ENCODE measurements at regions of chr7 and their contacts with region 1.

Region 1: GRCh38 chr7:82335927-82336326 is 107.7 kb downstream of the CACNA2D1 start:
- DNase-seq: no peak
- ATAC-seq: peak; percentile 87
- H3K4me3 ChIP-seq: no peak overlapping the region
- H3K27ac ChIP-seq: no peak overlapping the region
- H3K4me1 ChIP-seq: no peaks in the 10 kb centered on the region
- H3K27me3 ChIP-seq: no peaks in the 10 kb centered on the region
- CTCF ChIP-seq: no peak; a peak in 1 of 6 replicates
- EP300 ChIP-seq: no peak
- POLR2A ChIP-seq: no peak
- RAD21 ChIP-seq: no peak

Region 2: GRCh38 chr7:81361769-81362312 is 974.1 kb before region 1 on chr7:
- CTCF ChIA-PET with region 1: no interaction called
- POLR2A ChIA-PET with region 1: no interaction called
- RAD21 ChIA-PET with region 1: no interaction called
- SMC1A ChIA-PET with region 1: no interaction called
- in situ Hi-C with region 1: no loop called
- intact Hi-C with region 1: no loop called
- DNase-seq: no peak
- ATAC-seq: no peak
- H3K4me3 ChIP-seq: no peak overlapping the region
- H3K27ac ChIP-seq: no peak overlapping the region
- H3K4me1 ChIP-seq: no peaks in the 10 kb centered on the region
- H3K27me3 ChIP-seq: no peaks in the 10 kb centered on the region
- CTCF ChIP-seq: no peak
- EP300 ChIP-seq: no peak
- POLR2A ChIP-seq: no peak
- RAD21 ChIP-seq: no peak

Region 3: GRCh38 chr7:82325416-82325815 is 10.5 kb before region 1 on chr7:
- CTCF ChIA-PET with region 1: interaction called, 6 read pairs
- POLR2A ChIA-PET with region 1: interaction called, 6 read pairs
- RAD21 ChIA-PET with region 1: interaction called, 5 read pairs
- SMC1A ChIA-PET with region 1: interaction called, 31 read pairs
- in situ Hi-C with region 1: no loop called
- intact Hi-C with region 1: no loop called
- DNase-seq: no peak
- ATAC-seq: no peak
- H3K4me3 ChIP-seq: no peak overlapping the region
- H3K27ac ChIP-seq: no peak overlapping the region
- H3K4me1 ChIP-seq: no peaks in the 10 kb centered on the region
- H3K27me3 ChIP-seq: no peaks in the 10 kb centered on the region
- CTCF ChIP-seq: no peak
- EP300 ChIP-seq: no peak
- POLR2A ChIP-seq: no peak
- RAD21 ChIP-seq: no peak

Region 4: GRCh38 chr7:82348251-82348650 is 12.3 kb after region 1 on chr7:
- CTCF ChIA-PET with region 1: interaction called, 7 read pairs
- POLR2A ChIA-PET with region 1: interaction called, 8 read pairs
- RAD21 ChIA-PET with region 1: interaction called, 15 read pairs
- SMC1A ChIA-PET with region 1: interaction called, 68 read pairs
- in situ Hi-C with region 1: no loop called
- intact Hi-C with region 1: no loop called
- DNase-seq: no peak
- ATAC-seq: peak; percentile 16; the same call in 2 of the 3 replicates
- H3K4me3 ChIP-seq: no peak overlapping the region
- H3K27ac ChIP-seq: no peak overlapping the region
- H3K4me1 ChIP-seq: no peaks in the 10 kb centered on the region
- H3K27me3 ChIP-seq: no peaks in the 10 kb centered on the region
- CTCF ChIP-seq: no peak
- EP300 ChIP-seq: no peak
- POLR2A ChIP-seq: no peak
- RAD21 ChIP-seq: no peak

Region 5: DNA sequence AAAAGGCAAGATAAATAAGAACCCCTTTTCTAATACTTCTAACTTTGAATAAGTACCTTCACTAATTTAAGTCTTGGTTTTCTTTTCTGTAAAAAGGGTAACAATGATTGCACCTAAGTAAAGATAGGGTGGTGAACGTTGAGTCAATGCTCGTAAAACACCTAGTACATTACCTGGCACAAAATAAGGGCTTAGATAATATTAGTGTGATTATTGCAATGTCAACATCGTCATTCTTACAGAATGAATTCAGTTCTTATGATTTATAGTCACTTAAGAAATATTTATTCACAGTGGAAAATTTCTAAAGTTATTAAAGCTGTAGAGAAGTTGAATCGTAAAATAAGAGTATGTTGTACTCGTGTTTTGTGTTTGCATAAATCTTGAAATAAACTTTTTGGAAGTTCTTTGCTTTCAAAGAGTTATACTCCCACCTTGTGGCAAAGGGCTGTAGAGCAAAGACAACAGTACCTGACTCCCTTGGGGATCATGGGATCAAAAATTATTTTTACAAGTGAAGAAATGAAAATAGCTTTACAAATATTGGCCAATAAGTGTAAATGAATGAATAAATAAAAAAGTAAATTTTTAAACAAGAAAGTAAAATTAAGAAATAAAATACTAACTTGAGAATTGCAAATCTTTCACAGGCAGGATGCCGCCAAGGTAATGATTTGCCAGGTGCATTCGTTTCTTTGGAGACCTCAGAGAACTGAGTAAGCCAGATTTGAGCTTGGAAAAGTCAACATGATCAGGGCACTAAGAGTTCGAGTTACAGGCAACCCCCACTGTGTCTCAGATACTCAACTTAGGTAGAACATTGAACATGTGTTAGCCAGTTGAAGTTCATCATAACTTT is 393.5 kb after region 1 on chr7:
- CTCF ChIA-PET with region 1: no interaction called
- POLR2A ChIA-PET with region 1: no interaction called
- RAD21 ChIA-PET with region 1: no interaction called
- SMC1A ChIA-PET with region 1: no interaction called
- in situ Hi-C with region 1: no loop called
- intact Hi-C with region 1: no loop called
- DNase-seq: no peak
- ATAC-seq: peak; percentile 56; the same call in 2 of the 3 replicates
- H3K4me3 ChIP-seq: no peak overlapping the region
- H3K27ac ChIP-seq: no peak overlapping the region
- H3K4me1 ChIP-seq: no peaks in the 10 kb centered on the region
- H3K27me3 ChIP-seq: no peaks in the 10 kb centered on the region
- CTCF ChIP-seq: peak; percentile 55 to 72 (median 56)
- EP300 ChIP-seq: no peak
- POLR2A ChIP-seq: no peak
- RAD21 ChIP-seq: peak; percentile 80